ENCODE measurements at regions of chr15 and their contacts with region 1.

Region 1: DNA sequence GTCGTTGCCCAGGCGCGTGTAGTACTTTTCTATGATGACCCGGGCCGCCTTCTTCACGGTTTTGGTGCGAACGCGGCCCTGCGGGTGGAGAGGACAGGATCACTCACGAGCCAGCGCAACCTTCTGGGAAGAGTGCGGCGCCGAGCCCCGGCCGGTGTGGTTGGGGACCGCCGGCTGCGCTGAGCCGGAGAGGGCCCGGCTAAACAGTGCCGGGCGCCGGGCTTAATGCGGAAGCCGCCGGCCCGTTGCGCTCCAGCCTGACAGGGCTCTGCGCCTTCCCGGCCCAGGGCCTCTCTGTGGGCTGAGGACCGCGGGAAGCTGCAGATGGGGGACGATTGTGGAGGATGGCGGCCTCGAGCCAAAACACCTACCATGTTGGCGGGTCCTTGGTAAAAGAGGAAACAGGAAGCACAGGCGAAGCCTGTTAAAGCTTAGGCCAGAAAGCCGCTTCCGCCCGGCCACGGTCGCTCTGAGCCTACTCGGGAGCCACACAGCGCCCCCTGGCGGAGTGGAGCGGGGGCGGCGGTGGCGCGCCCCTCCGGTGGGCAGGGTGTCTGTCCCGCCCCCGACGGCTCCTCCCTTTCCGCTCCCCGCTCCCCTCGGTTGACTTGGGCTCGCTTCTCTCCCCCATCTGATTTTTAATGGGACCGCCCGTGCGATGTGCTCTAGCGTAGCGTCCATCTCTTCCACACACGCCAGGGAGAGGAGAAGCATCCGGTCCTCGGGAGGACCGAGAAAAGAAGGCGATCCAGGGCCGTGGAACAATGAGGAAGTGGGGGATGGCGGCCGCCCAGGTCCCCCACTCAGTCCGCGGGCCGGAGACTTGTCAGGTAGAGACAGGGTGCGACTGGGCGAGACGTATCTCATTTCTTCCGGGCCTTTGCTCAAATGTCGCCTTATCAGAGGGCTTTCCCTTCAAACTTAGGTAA is at the start of gene RPS17:
- DNase-seq: peak; percentile 52
- H3K4me3 ChIP-seq: peak within 1 kb of the TSS; percentile 98
- CTCF ChIP-seq: peak; percentile 99

Region 2: GRCh38 chr15:82554849-82555248 is 14.5 kb after region 1 on chr15:
- CTCF ChIA-PET with region 1: interaction called, 15 read pairs
- POLR2A ChIA-PET with region 1: interaction called, 3 read pairs
- DNase-seq: no peak
- H3K4me3 ChIP-seq: no peak overlapping the region
- CTCF ChIP-seq: no peak

Region 3: GRCh38 chr15:82566690-82567089 is 26.4 kb after region 1 on chr15:
- CTCF ChIA-PET with region 1: interaction called, 25 read pairs
- POLR2A ChIA-PET with region 1: interaction called, 14 read pairs
- DNase-seq: peak; percentile 71
- H3K4me3 ChIP-seq: no peak overlapping the region; the same call in 1 of the 2 replicates
- CTCF ChIP-seq: no peak

Region 4: GRCh38 chr15:82571722-82572222 is 31.5 kb after region 1 on chr15:
- CTCF ChIA-PET with region 1: interaction called, 25 read pairs
- POLR2A ChIA-PET with region 1: interaction called, 14 read pairs
- DNase-seq: peak; percentile 24
- H3K4me3 ChIP-seq: peak overlapping the region; percentile 52
- CTCF ChIP-seq: no peak

Region 5: DNA sequence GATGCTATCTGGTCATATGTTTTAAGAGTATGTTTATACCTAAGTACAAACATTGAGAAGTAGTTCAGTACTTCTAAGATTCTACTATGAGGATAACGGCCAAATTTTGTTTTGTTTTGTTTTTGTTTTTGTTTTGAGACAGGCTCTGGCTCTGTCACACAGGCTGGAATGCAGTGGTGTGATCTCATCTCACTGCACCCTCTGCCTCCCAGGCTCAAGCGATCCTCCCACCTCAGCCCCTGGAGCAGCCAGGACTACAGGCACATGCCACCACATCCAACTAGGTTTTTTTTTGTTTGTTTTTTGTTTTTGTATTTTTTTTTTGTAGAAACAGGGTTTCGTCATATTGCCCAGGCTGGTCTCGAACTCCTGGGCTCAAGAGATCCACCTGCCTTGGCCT is 47.5 kb after region 1 on chr15:
- CTCF ChIA-PET with region 1: no interaction called
- POLR2A ChIA-PET with region 1: no interaction called
- DNase-seq: no peak
- H3K4me3 ChIP-seq: no peak overlapping the region
- CTCF ChIP-seq: no peak

Region 6: DNA sequence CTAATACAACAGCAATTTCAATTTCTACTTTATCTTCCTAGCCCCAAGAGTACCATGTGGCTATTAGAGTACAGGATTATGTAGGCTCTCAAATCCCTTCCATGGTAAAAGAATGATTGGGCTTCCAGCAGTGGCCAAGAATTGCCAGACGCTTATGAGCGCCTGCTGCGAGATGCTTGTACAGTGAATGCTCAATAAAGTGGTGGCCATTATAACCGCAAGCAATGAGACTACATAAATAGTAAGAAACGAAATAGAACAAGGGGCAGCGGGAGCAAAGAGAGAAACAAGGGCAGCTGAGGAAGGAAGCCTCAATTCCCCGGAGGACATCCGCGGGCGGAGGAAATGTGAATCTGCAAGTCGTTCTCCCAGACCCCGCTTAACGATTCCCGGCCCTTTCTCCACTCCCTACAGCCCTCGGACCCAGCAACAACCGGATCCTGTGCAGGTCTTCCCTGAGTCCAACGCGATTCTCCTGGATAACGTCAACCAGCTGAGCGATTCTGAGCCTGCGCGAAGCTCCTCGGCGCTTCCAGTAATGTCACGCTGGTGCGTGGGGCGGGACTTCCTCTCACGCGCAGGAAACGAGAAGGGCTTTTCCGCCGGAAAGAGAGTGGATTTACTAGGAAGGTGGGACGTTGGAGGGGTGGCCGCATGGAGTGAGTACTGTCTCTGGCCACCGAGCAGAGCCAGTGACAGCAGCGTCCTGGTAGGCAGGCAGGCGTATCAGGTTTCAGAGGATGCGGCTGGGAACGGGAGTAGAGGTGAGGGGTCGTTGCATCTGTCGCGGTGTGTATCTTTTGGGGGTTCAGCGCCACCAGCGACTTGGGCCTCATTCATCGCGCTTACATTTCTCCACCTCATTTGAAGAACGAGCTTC is 209.9 kb after region 1 on chr15:
- CTCF ChIA-PET with region 1: interaction called, 13 read pairs
- POLR2A ChIA-PET with region 1: interaction called, 26 read pairs
- DNase-seq: peak; percentile 65
- H3K4me3 ChIP-seq: peak overlapping the region; percentile 92
- CTCF ChIP-seq: no peak